Endothelial cell of umbilical vein (primary cell): ENCODE measurements at regions of chr1 and their contacts with region 1.

Region 1: GRCh38 chr1:192477630-192478029 is 97.9 kb upstream of the RGS1 start:
- DNase-seq: peak; percentile 65
- H3K4me3 ChIP-seq: no peak overlapping the region
- H3K27ac ChIP-seq: no peak overlapping the region
- H3K4me1 ChIP-seq: no peaks in the 10 kb centered on the region
- H3K27me3 ChIP-seq: no peaks in the 10 kb centered on the region
- CTCF ChIP-seq: peak; percentile 14 to 30
- POLR2A ChIP-seq: no peak

Region 2: GRCh38 chr1:192516776-192517297 is 39.2 kb after region 1 on chr1:
- CTCF ChIA-PET with region 1: interaction called, 10 read pairs
- POLR2A ChIA-PET with region 1: no interaction called
- dilution Hi-C with region 1: no loop called
- intact Hi-C with region 1: no loop called
- DNase-seq: no peak
- H3K4me3 ChIP-seq: no peak overlapping the region
- H3K27ac ChIP-seq: no peak overlapping the region
- H3K4me1 ChIP-seq: peaks cover 20% of the 10 kb centered on the region
- H3K27me3 ChIP-seq: no peaks in the 10 kb centered on the region
- CTCF ChIP-seq: no peak
- POLR2A ChIP-seq: no peak

Region 3: GRCh38 chr1:192580351-192580962 is 102.8 kb after region 1 on chr1:
- CTCF ChIA-PET with region 1: interaction called, 128 read pairs
- POLR2A ChIA-PET with region 1: no interaction called
- dilution Hi-C with region 1: loop called (anchors 25 kb)
- intact Hi-C with region 1: loop called (anchors 1 kb)
- DNase-seq: peak; percentile 75
- H3K4me3 ChIP-seq: no peak overlapping the region
- H3K27ac ChIP-seq: no peak overlapping the region
- H3K4me1 ChIP-seq: no peaks in the 10 kb centered on the region
- H3K27me3 ChIP-seq: no peaks in the 10 kb centered on the region
- CTCF ChIP-seq: peak; percentile 25 to 35
- POLR2A ChIP-seq: no peak

Region 4: GRCh38 chr1:192615055-192615454 is 137.4 kb after region 1 on chr1:
- CTCF ChIA-PET with region 1: interaction called, 283 read pairs
- POLR2A ChIA-PET with region 1: no interaction called
- dilution Hi-C with region 1: no loop called
- intact Hi-C with region 1: loop called (anchors 1 kb)
- DNase-seq: no peak
- H3K4me3 ChIP-seq: no peak overlapping the region
- H3K27ac ChIP-seq: no peak overlapping the region
- H3K4me1 ChIP-seq: peaks cover 2% of the 10 kb centered on the region
- H3K27me3 ChIP-seq: no peaks in the 10 kb centered on the region
- CTCF ChIP-seq: no peak
- POLR2A ChIP-seq: no peak

Region 5: DNA sequence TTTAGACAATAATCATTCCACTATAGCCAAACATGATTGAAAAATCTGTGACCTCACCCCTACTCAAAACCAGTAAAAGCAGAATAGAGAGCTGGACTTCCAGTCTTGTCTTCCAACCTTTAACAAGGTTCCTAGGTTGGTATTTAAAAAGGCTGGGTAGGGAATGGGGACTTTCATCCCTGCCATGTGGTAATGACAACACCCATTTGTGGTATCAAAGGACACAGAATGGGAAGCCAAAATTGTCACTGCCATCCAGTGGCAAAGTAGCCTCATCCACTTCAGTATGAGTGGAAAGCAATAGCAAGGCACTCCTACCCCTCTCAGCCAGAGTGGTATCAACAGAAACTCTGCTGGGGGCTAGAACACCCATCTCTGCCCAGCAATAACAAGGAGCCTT is 547.6 kb after region 1 on chr1:
- CTCF ChIA-PET with region 1: interaction called, 163 read pairs
- POLR2A ChIA-PET with region 1: no interaction called
- dilution Hi-C with region 1: no loop called
- intact Hi-C with region 1: no loop called
- DNase-seq: no peak
- H3K4me3 ChIP-seq: no peak overlapping the region
- H3K27ac ChIP-seq: peak overlapping the region; percentile 11
- H3K4me1 ChIP-seq: no peaks in the 10 kb centered on the region
- H3K27me3 ChIP-seq: no peaks in the 10 kb centered on the region
- CTCF ChIP-seq: no peak
- POLR2A ChIP-seq: no peak